ENCODE measurements at regions of chr2 and their contacts with region 1.

Region 1: GRCh38 chr2:186256540-186256939 is 229.5 kb upstream of the ZC3H15 start:
- DNase-seq: peak; percentile 44
- ATAC-seq: peak; percentile 79
- H3K4me3 ChIP-seq: no peak overlapping the region
- H3K27ac ChIP-seq: no peak overlapping the region
- H3K4me1 ChIP-seq: no peaks in the 10 kb centered on the region
- H3K27me3 ChIP-seq: no peaks in the 10 kb centered on the region
- CTCF ChIP-seq: peak; percentile 61
- POLR2A ChIP-seq: no peak
- RAD21 ChIP-seq: peak; percentile 69

Region 2: DNA sequence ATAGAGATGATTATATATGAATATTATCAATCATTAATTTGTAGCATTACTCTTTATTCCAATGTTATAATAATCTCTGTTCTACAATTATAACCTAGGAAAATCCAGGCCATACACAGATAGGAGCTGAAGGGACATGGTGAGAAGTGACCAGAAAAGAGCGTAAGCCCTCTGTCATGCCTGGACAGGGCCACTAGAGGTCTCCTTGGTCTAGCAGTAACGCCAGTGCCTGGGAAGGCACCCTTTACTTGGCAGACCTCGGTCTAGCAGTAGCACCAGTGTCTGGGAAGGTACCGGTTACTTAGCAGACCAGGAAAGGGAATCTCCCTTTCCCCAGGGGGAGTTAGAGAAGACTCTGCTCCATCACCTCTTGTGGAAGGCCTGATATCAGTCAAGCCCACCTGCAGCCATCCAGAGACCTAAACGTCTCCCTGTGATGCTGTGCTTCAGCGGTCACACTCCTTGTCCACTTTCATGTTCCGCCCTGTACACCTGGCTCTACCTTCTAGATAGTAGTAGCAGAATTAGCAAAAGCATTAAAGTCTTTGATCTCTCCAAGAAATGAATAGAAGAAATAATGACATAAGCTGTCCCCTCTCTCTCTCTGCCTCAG is 965.4 kb before region 1 on chr2:
- CTCF ChIA-PET with region 1: no interaction called
- POLR2A ChIA-PET with region 1: no interaction called
- dilution Hi-C with region 1: no loop called
- in situ Hi-C with region 1: no loop called
- intact Hi-C with region 1: loop called (anchors 5 kb)
- DNase-seq: peak; percentile 10
- ATAC-seq: peak; percentile 54; the same call in 1 of the 2 replicates
- H3K4me3 ChIP-seq: no peak overlapping the region
- H3K27ac ChIP-seq: no peak overlapping the region
- H3K4me1 ChIP-seq: no peaks in the 10 kb centered on the region
- H3K27me3 ChIP-seq: no peaks in the 10 kb centered on the region
- CTCF ChIP-seq: peak; percentile 32
- POLR2A ChIP-seq: no peak
- RAD21 ChIP-seq: peak; percentile 42

Region 3: DNA sequence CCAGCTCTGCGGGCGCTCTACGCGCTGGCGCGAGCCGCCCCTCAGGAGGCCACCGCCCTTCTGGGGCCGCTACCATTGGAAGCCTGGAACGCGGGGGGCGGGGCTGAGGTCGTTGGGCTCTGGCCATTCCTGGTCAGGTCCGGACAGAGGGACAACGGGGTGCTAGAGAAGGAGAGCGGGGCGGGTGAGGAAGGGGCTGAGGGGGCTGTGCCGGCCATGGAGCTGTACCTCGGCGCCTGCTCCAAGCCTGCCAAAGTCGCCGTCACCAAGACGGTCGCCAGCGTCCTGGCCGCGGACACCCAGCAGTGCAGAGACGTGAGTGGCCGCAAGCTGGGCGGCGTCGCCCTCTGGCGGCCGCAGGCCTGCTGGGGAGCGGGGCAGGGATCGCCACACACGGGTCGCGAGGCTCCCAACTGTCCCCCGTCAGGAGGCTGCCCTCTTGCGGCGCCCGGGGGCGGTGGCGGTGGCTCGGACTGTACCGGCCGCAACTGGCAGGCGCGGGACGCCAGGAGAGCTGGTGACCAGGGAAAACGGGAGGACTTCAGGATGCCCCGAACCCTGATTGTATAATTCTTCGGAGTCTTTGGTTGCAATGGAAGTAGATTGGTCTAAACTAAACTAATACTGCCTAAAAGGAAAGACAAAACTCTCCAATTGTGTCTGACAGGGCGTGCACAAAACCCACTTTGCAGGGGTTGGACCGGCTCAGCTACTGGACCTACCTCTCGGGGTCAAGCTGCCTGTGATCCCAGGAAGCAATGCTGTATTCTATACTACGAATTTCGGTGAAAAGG is 517.7 kb before region 1 on chr2 and contains the start of gene FSIP2:
- CTCF ChIA-PET with region 1: no interaction called
- POLR2A ChIA-PET with region 1: no interaction called
- dilution Hi-C with region 1: no loop called
- in situ Hi-C with region 1: no loop called
- intact Hi-C with region 1: loop called (anchors 10 kb)
- DNase-seq: peak; percentile 9
- ATAC-seq: peak; percentile 88
- H3K4me3 ChIP-seq: peak within 1 kb of the TSS; percentile 12; the same call in 1 of the 2 replicates
- H3K27ac ChIP-seq: no peak within 1 kb of the TSS
- H3K4me1 ChIP-seq: no peaks in the 10 kb centered on the region
- H3K27me3 ChIP-seq: no peaks in the 10 kb centered on the region
- CTCF ChIP-seq: peak; percentile 46
- POLR2A ChIP-seq: no peak
- RAD21 ChIP-seq: peak; percentile 26; the same call in 1 of the 2 replicates
- total RNA-seq, gene FSIP2: under 0.01 TPM in 1 of 2 replicates, not detected in the other

Region 4: DNA sequence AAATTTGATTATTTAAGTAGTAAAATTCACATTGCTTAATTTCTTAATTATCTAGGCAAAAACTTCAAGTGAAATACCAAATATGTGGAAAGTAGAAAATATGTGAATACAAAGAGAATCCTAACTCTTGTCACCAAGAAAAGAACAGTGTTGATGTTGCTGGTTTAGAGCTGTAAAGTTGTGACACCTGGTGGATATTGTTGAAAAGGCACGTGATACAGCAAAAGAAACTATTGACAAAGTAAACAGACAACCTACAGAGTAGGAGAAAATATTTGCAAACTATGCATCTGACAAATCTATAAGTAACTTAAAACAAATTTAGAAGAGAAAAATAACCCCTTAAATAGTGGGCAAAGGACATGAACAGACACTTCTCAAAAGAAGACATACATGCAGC is 203.9 kb after region 1 on chr2:
- CTCF ChIA-PET with region 1: no interaction called
- POLR2A ChIA-PET with region 1: no interaction called
- dilution Hi-C with region 1: no loop called
- in situ Hi-C with region 1: no loop called
- intact Hi-C with region 1: loop called (anchors 5 kb)
- DNase-seq: peak; percentile 32
- ATAC-seq: no peak
- H3K4me3 ChIP-seq: no peak overlapping the region
- H3K27ac ChIP-seq: no peak overlapping the region
- H3K4me1 ChIP-seq: no peaks in the 10 kb centered on the region
- H3K27me3 ChIP-seq: no peaks in the 10 kb centered on the region; the same call in 1 of the 2 replicates
- CTCF ChIP-seq: peak; percentile 41; the same call in 1 of the 2 replicates
- POLR2A ChIP-seq: no peak
- RAD21 ChIP-seq: peak; percentile 60